ENCODE measurements at regions of chr6 and their contacts with region 1.

Region 1: DNA sequence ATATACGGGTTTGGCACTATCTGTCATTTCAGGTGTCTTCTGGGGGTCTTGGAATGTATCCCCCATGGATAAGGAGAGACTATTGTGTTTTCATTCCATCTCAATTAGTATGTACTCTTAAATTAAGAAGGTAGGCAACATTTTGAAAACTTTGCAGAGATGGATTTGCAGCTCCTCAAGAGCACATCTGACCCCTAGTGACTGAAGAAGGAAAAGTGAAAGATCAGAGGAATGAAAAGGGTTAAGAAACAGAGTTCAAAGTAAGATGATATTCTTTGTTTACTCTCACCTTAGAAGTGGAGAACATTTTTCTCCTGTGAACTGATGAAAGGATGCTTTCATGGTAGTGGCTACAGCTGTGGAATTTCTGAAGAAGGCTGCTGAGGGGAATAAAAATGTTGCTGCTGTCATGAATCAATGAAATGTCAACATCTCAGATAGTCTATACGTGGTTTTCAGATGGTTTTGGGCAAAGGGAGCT is 41.5 kb downstream of the SH3BGRL2 start:
- DNase-seq: peak; percentile 23
- H3K4me3 Mint-ChIP-seq: peak overlapping the region; percentile 11
- H3K27ac Mint-ChIP-seq: peak overlapping the region; percentile 97
- H3K4me1 Mint-ChIP-seq: peaks cover 80% of the 10 kb centered on the region
- H3K27me3 Mint-ChIP-seq: no peaks in the 10 kb centered on the region
- CTCF ChIP-seq: peak; percentile 66

Region 2: GRCh38 chr6:79233611-79234149 is 439.0 kb before region 1 on chr6:
- CTCF ChIA-PET with region 1: no interaction called
- intact Hi-C with region 1: loop called (anchors 10 kb)
- DNase-seq: peak; percentile 87
- H3K4me3 Mint-ChIP-seq: peak overlapping the region; percentile 89
- H3K27ac Mint-ChIP-seq: peak overlapping the region; percentile 78
- H3K4me1 Mint-ChIP-seq: peaks cover 54% of the 10 kb centered on the region
- H3K27me3 Mint-ChIP-seq: no peaks in the 10 kb centered on the region
- CTCF ChIP-seq: peak; percentile 14

Region 3: GRCh38 chr6:79557673-79558467 is 114.8 kb before region 1 on chr6:
- CTCF ChIA-PET with region 1: no interaction called
- intact Hi-C with region 1: no loop called
- DNase-seq: no peak
- H3K4me3 Mint-ChIP-seq: no peak overlapping the region
- H3K27ac Mint-ChIP-seq: no peak overlapping the region
- H3K4me1 Mint-ChIP-seq: no peaks in the 10 kb centered on the region
- H3K27me3 Mint-ChIP-seq: no peaks in the 10 kb centered on the region
- CTCF ChIP-seq: no peak

Region 4: GRCh38 chr6:79570129-79571029 is 102.3 kb before region 1 on chr6:
- CTCF ChIA-PET with region 1: interaction called, 17 read pairs
- intact Hi-C with region 1: loop called (anchors 1 kb)
- DNase-seq: peak; percentile 87
- H3K4me3 Mint-ChIP-seq: peak overlapping the region; percentile 37
- H3K27ac Mint-ChIP-seq: peak overlapping the region; percentile 98
- H3K4me1 Mint-ChIP-seq: peaks cover 70% of the 10 kb centered on the region
- H3K27me3 Mint-ChIP-seq: no peaks in the 10 kb centered on the region
- CTCF ChIP-seq: peak; percentile 53

Region 5: GRCh38 chr6:79630883-79631692 is 41.6 kb before region 1 on chr6 and contains the start of gene SH3BGRL2:
- CTCF ChIA-PET with region 1: interaction called, 6 read pairs
- intact Hi-C with region 1: loop called (anchors 2 kb)
- DNase-seq: peak; percentile 84
- H3K4me3 Mint-ChIP-seq: peak within 1 kb of the TSS; percentile 95
- H3K27ac Mint-ChIP-seq: peak within 1 kb of the TSS; percentile 89
- H3K4me1 Mint-ChIP-seq: peaks cover 49% of the 10 kb centered on the region
- H3K27me3 Mint-ChIP-seq: no peaks in the 10 kb centered on the region
- CTCF ChIP-seq: no peak
- total RNA-seq, gene SH3BGRL2: 44.3 and 46.1 TPM in 2 replicates

Region 6: GRCh38 chr6:79687759-79688158 is 15.1 kb after region 1 on chr6:
- CTCF ChIA-PET with region 1: interaction called, 8 read pairs
- intact Hi-C with region 1: loop called (anchors 2 kb)
- DNase-seq: no peak
- H3K4me3 Mint-ChIP-seq: no peak overlapping the region
- H3K27ac Mint-ChIP-seq: no peak overlapping the region
- H3K4me1 Mint-ChIP-seq: peaks cover 40% of the 10 kb centered on the region
- H3K27me3 Mint-ChIP-seq: no peaks in the 10 kb centered on the region
- CTCF ChIP-seq: no peak

Region 7: DNA sequence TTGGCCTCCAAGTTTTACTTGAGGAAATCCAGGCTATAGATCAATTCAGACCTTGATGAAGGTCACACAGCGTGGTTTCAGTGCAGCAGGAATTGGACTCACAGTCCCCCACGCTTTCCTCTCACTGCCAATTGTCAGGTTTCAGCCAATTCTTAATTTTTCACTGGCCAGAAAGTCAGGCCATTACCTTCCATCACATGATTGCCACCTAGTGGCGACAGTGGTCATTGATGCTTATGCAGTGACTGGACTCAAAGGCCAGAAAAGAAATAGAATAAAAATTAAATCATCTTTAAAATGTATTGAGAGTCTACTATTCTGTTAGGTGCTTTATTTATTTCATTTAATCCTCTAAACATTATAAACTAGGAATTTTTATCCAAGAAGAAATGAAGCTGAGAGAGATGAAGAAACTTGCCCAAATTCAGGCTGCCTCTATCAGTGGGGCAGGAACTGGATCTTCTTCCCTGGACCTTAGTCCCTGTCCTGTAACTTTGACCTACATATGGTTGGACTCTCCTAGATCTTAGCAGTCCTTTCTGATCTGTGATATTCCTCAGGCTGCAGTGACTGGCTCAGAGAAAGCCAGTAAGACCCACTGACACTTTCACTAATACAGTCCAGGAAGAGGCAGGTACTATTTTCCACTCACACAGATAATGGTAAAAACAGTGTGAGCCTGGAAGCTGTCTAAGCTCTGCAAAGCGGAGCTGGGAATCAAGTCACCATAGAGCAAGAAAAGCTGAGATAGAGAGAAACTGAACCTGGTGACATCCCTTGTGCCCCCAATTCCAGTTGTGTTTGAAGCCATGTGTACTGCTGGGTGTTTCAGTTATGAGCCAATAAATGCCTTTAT is 141.4 kb after region 1 on chr6:
- CTCF ChIA-PET with region 1: no interaction called
- intact Hi-C with region 1: no loop called
- DNase-seq: peak; percentile 82
- H3K4me3 Mint-ChIP-seq: no peak overlapping the region
- H3K27ac Mint-ChIP-seq: no peak overlapping the region
- H3K4me1 Mint-ChIP-seq: no peaks in the 10 kb centered on the region
- H3K27me3 Mint-ChIP-seq: no peaks in the 10 kb centered on the region
- CTCF ChIP-seq: peak; percentile 67